Sigmoid colon (tissue), 7 donors: ENCODE measurements at regions of chr10 and their contacts with region 1.

Region 1: DNA sequence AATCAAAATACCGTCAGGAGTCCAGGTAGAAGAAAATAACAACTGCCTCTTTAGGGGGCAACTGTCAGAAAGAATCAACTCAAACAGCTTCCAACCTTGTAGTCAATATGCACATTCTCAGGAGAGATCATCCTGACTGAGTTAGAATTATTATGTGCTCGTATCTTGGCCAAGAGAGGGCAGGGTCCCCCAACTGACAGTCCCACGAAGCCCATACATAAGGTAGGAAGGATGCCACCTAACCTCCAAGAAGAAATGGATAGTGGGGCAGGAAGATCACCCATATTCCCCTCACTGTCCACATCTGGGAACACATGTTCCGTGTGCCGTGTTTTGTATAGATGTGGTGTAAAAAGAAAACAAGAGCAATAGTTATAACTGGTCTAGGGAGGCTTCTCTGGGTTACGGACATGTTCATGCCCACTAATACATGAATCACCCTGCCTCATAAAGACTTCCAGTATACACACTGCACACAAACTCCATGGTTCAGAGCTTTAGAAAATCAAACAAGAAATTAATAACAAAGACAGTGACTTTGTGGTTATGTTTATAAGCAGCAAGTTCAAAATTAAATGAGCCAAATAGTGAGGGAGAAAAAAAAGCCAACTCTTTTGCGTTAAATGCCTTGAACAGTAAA is 295.6 kb downstream of the FGFR2 start:
- DNase-seq: no peak
- H3K4me3 ChIP-seq: no peak overlapping the region
- H3K27ac ChIP-seq: peak overlapping the region in 3 of 4 donors; percentile 49 to 72 (median 59)
- H3K4me1 ChIP-seq: peaks cover 0 to 55% (median 15%) of the 10 kb centered on the region in 4 donors
- H3K27me3 ChIP-seq: no peaks in the 10 kb centered on the region
- CTCF ChIP-seq: no peak
- EP300 ChIP-seq: peak in 1 of 4 donors; percentile 29
- POLR2A ChIP-seq: no peak

Region 2: DNA sequence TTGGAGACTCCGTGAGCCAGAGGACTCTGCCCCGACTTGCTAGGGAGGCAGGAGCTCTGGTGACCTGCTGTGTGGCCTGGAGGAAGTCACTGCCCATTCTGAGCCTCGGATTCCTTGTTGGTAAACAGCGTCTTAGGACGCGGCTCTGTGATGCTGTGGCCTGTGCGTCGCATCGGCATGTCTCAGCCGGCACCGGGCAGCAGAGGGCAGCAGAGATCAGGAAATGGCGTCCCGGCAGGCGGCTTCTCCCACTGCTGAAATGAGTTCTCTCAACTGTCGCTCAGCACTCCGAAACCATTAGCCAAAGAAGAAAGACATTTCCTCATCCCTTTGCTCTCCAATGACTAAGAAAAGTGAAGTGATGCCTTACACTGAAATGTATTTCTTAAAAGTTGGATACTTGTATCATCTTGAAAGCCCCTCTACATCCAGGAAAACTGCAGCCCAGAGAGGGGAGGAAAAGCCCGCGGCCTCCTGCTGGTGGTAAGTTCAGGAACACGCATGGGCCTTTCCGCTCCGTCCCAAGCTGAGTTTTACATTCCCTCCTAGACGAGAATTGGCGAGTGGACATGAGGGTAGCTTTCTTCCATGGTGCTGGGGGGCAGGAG is 359.8 kb before region 1 on chr10:
- intact Hi-C with region 1: loop called (anchors 10 kb)
- DNase-seq: peak; percentile 88
- H3K4me3 ChIP-seq: no peak overlapping the region
- H3K27ac ChIP-seq: no peak overlapping the region
- H3K4me1 ChIP-seq: peaks cover 0 to 21% (median 16%) of the 10 kb centered on the region in 4 donors
- H3K27me3 ChIP-seq: no peaks in the 10 kb centered on the region
- CTCF ChIP-seq: peak; percentile 84 to 87 (median 86)
- EP300 ChIP-seq: no peak
- POLR2A ChIP-seq: no peak

Region 3: GRCh38 chr10:121027371-121027770 is 275.3 kb before region 1 on chr10:
- intact Hi-C with region 1: loop called (anchors 5 kb)
- DNase-seq: peak; percentile 74
- H3K4me3 ChIP-seq: no peak overlapping the region
- H3K27ac ChIP-seq: peak overlapping the region in 3 of 4 donors; percentile 54 to 73 (median 70)
- H3K4me1 ChIP-seq: peaks cover 0 to 55% (median 38%) of the 10 kb centered on the region in 4 donors
- H3K27me3 ChIP-seq: no peaks in the 10 kb centered on the region
- CTCF ChIP-seq: no peak
- EP300 ChIP-seq: peak in 2 of 4 donors; percentile 75 to 86
- POLR2A ChIP-seq: no peak

Region 4: GRCh38 chr10:121265360-121266123 is 37.1 kb before region 1 on chr10:
- intact Hi-C with region 1: no loop called
- DNase-seq: no peak
- H3K4me3 ChIP-seq: no peak overlapping the region
- H3K27ac ChIP-seq: peak overlapping the region in 2 of 4 donors; percentile 32 to 38
- H3K4me1 ChIP-seq: peaks cover 0 to 38% (median 24%) of the 10 kb centered on the region in 4 donors
- H3K27me3 ChIP-seq: no peaks in the 10 kb centered on the region
- CTCF ChIP-seq: no peak
- EP300 ChIP-seq: no peak
- POLR2A ChIP-seq: no peak

Region 5: DNA sequence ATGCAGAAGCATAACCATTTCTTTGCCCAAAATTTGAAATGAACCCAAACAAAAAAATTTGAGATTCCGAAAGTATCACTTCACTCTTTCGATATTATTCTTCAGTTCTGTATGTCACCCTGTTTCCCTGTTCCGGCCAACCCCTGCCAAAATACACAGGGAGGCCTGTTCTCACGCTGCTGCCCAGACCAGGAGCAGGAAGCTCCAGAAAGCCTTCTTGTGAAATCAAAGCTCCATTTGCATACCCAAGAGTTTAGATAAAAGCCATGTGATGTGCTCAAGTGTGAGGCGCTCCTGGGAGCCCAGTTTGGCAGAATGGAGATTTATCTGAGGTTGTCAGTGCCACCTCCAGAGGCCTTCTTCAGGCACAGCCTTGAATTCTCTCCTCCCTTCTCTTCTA is 59.4 kb after region 1 on chr10:
- intact Hi-C with region 1: no loop called
- DNase-seq: no peak
- H3K4me3 ChIP-seq: no peak overlapping the region
- H3K27ac ChIP-seq: no peak overlapping the region
- H3K4me1 ChIP-seq: no peaks in the 10 kb centered on the region
- H3K27me3 ChIP-seq: no peaks in the 10 kb centered on the region
- CTCF ChIP-seq: no peak
- EP300 ChIP-seq: no peak
- POLR2A ChIP-seq: no peak

Region 6: GRCh38 chr10:121527666-121528065 is 225.0 kb after region 1 on chr10:
- intact Hi-C with region 1: loop called (anchors 10 kb)
- DNase-seq: peak; percentile 83
- H3K4me3 ChIP-seq: no peak overlapping the region
- H3K27ac ChIP-seq: peak overlapping the region; percentile 61 to 89 (median 79)
- H3K4me1 ChIP-seq: peaks cover 0 to 81% (median 59%) of the 10 kb centered on the region in 4 donors
- H3K27me3 ChIP-seq: no peaks in the 10 kb centered on the region
- CTCF ChIP-seq: no peak
- EP300 ChIP-seq: no peak
- POLR2A ChIP-seq: no peak

Region 7: GRCh38 chr10:122368502-122369256 is 1066.0 kb after region 1 on chr10:
- intact Hi-C with region 1: no loop called
- DNase-seq: no peak
- H3K4me3 ChIP-seq: no peak overlapping the region
- H3K27ac ChIP-seq: no peak overlapping the region
- H3K4me1 ChIP-seq: peaks cover 0 to 43% (median 35%) of the 10 kb centered on the region in 4 donors
- H3K27me3 ChIP-seq: no peaks in the 10 kb centered on the region
- CTCF ChIP-seq: no peak
- EP300 ChIP-seq: no peak
- POLR2A ChIP-seq: no peak